ENCODE measurements at regions of chr14 and their contacts with region 1.

Region 1: DNA sequence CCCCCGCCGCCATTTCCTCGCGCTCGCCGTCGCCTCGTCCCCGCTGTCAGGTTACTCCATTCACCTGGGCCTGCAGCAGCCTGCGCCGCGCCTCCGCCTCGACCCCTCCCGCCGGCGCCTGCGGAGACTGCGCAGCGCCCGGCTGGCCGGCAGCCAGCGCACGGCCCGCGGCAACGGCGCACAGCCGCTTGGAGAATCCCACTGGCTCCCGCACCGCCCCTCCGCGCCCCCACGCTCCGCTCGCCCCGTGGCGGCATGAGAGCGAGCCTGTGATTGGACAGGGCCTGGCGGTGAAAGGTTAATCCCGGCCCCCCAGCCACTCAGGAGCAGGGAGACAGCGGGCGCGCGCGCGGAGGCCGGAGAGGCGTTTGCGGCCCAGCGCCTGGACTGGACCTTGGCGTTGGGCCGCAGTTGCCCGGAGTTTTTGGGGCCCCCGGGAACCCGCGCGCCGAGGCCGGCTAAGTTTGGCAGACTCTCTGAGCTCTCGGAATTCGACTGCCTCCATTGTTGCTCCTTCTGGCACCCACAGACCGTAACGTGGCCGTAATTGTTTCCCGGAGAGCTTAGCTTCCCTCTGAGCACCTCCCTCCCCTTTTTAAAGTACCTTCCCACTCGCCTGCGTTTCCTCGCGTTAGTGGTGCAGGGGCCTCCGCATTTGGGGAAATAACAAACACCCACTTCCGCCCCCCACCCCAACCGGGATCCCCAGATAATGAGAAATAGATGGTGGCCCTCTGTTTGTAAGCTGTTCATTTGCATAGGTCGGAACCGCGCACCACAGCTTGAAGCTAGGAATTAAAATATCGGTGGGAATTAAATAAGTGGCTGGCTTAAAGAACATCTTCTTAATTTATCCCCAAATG is at the start of gene DICER1:
- DNase-seq: peak; percentile 90 to 98 (median 94)
- ATAC-seq: peak; percentile 84
- H3K4me3 ChIP-seq: peak within 1 kb of the TSS; percentile 87
- H3K4me3 Mint-ChIP-seq: peak within 1 kb of the TSS; percentile 98
- H3K27ac ChIP-seq: peak within 1 kb of the TSS; percentile 89 to 95
- H3K27ac Mint-ChIP-seq: peak within 1 kb of the TSS; percentile 99
- H3K4me1 ChIP-seq: peaks cover 40% of the 10 kb centered on the region
- H3K4me1 Mint-ChIP-seq: peaks cover 42% of the 10 kb centered on the region
- H3K27me3 ChIP-seq: no peaks in the 10 kb centered on the region
- H3K27me3 Mint-ChIP-seq: no peaks in the 10 kb centered on the region
- CTCF ChIP-seq: no peak
- total RNA-seq, gene DICER1: 75.0 to 77.1 TPM

Region 2: GRCh38 chr14:94180655-94181271 is 976.8 kb before region 1 on chr14:
- CTCF ChIA-PET with region 1: no interaction called
- POLR2A ChIA-PET with region 1: no interaction called
- intact Hi-C with region 1: loop called in 1 of 2 experiments (anchors 5 kb)
- DNase-seq: peak in 3 of 9 experiments; percentile 32 to 76 (median 68)
- ATAC-seq: peak; percentile 86
- H3K4me3 ChIP-seq: no peak overlapping the region
- H3K4me3 Mint-ChIP-seq: peak overlapping the region; percentile 49
- H3K27ac ChIP-seq: no peak overlapping the region
- H3K27ac Mint-ChIP-seq: peak overlapping the region; percentile 63
- H3K4me1 ChIP-seq: no peaks in the 10 kb centered on the region
- H3K4me1 Mint-ChIP-seq: peaks cover 9% of the 10 kb centered on the region
- H3K27me3 ChIP-seq: peaks cover 0 to 2% of the 10 kb centered on the region in 2 experiments
- H3K27me3 Mint-ChIP-seq: peaks cover 15% of the 10 kb centered on the region
- CTCF ChIP-seq: peak; percentile 81

Region 3: DNA sequence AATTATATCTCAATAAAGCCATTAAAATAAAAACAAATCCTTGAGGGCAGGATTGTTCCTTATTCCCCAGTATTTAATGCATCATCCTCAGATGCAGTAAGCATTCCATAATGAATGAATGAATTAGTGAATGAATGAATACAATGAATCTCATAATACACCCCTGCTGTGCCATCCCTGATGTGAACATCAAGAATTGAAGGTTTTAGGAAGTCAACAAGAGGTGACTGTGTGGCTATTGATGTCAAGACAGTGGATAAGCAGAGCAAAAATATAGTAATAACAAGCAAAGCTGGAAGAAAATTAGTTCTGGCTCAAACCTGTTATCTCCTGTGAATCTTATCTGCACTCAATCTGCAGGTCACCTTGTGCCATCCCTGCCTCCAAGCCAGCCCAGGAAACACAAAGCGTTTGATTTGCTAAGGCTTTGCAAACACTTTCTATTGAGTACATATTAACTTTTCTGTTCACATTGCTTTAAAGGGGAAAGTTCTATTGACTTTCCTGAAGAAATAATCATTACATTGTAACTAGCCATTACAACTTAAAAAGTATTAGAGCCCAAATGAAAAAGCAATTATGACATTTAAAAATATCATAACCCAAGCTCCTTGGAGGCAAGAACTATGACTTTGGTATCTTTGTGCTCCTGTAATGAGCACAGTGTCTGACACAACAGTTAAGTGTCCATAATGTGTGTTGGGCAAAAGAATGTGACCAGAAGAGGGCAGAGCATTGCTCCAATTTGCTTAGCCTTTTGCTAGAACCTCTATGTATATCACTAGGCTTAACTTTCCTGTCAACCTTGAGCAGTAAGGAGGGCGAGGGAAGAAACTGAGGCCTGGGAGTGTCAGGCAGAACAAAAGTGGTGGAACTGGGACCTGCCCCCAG is 520.8 kb before region 1 on chr14:
- CTCF ChIA-PET with region 1: no interaction called
- POLR2A ChIA-PET with region 1: no interaction called
- intact Hi-C with region 1: no loop called
- DNase-seq: no peak
- ATAC-seq: no peak
- H3K4me3 ChIP-seq: no peak overlapping the region
- H3K4me3 Mint-ChIP-seq: no peak overlapping the region
- H3K27ac ChIP-seq: no peak overlapping the region
- H3K27ac Mint-ChIP-seq: no peak overlapping the region
- H3K4me1 ChIP-seq: no peaks in the 10 kb centered on the region
- H3K4me1 Mint-ChIP-seq: no peaks in the 10 kb centered on the region
- H3K27me3 ChIP-seq: no peaks in the 10 kb centered on the region
- H3K27me3 Mint-ChIP-seq: peaks cover 10% of the 10 kb centered on the region
- CTCF ChIP-seq: no peak

Region 4: GRCh38 chr14:95123891-95124579 is 33.5 kb before region 1 on chr14:
- CTCF ChIA-PET with region 1: no interaction called
- POLR2A ChIA-PET with region 1: no interaction called
- intact Hi-C with region 1: no loop called
- DNase-seq: no peak
- ATAC-seq: no peak
- H3K4me3 ChIP-seq: no peak overlapping the region
- H3K4me3 Mint-ChIP-seq: no peak overlapping the region
- H3K27ac ChIP-seq: no peak overlapping the region
- H3K27ac Mint-ChIP-seq: no peak overlapping the region
- H3K4me1 ChIP-seq: no peaks in the 10 kb centered on the region
- H3K4me1 Mint-ChIP-seq: peaks cover 19% of the 10 kb centered on the region
- H3K27me3 ChIP-seq: no peaks in the 10 kb centered on the region
- H3K27me3 Mint-ChIP-seq: no peaks in the 10 kb centered on the region
- CTCF ChIP-seq: no peak

Region 5: GRCh38 chr14:95197552-95197950 is 40.0 kb after region 1 on chr14:
- CTCF ChIA-PET with region 1: no interaction called
- POLR2A ChIA-PET with region 1: no interaction called
- intact Hi-C with region 1: no loop called
- DNase-seq: peak in 1 of 9 experiments; percentile 32
- ATAC-seq: no peak
- H3K4me3 ChIP-seq: no peak overlapping the region
- H3K4me3 Mint-ChIP-seq: no peak overlapping the region
- H3K27ac ChIP-seq: no peak overlapping the region
- H3K27ac Mint-ChIP-seq: no peak overlapping the region
- H3K4me1 ChIP-seq: no peaks in the 10 kb centered on the region
- H3K4me1 Mint-ChIP-seq: peaks cover 2% of the 10 kb centered on the region
- H3K27me3 ChIP-seq: no peaks in the 10 kb centered on the region
- H3K27me3 Mint-ChIP-seq: no peaks in the 10 kb centered on the region
- CTCF ChIP-seq: no peak

Region 6: GRCh38 chr14:95515596-95516552 is 358.3 kb after region 1 on chr14:
- CTCF ChIA-PET with region 1: no interaction called
- POLR2A ChIA-PET with region 1: no interaction called
- intact Hi-C with region 1: loop called in 1 of 2 experiments (anchors 5 kb)
- DNase-seq: peak; percentile 62 to 94 (median 84)
- ATAC-seq: peak; percentile 85
- H3K4me3 ChIP-seq: peak overlapping the region; percentile 65 to 79
- H3K4me3 Mint-ChIP-seq: peak overlapping the region; percentile 89
- H3K27ac ChIP-seq: peak overlapping the region; percentile 59 to 64
- H3K27ac Mint-ChIP-seq: peak overlapping the region; percentile 93
- H3K4me1 ChIP-seq: peaks cover 66% of the 10 kb centered on the region
- H3K4me1 Mint-ChIP-seq: peaks cover 70% of the 10 kb centered on the region
- H3K27me3 ChIP-seq: no peaks in the 10 kb centered on the region
- H3K27me3 Mint-ChIP-seq: no peaks in the 10 kb centered on the region
- CTCF ChIP-seq: peak; percentile 46

Region 7: DNA sequence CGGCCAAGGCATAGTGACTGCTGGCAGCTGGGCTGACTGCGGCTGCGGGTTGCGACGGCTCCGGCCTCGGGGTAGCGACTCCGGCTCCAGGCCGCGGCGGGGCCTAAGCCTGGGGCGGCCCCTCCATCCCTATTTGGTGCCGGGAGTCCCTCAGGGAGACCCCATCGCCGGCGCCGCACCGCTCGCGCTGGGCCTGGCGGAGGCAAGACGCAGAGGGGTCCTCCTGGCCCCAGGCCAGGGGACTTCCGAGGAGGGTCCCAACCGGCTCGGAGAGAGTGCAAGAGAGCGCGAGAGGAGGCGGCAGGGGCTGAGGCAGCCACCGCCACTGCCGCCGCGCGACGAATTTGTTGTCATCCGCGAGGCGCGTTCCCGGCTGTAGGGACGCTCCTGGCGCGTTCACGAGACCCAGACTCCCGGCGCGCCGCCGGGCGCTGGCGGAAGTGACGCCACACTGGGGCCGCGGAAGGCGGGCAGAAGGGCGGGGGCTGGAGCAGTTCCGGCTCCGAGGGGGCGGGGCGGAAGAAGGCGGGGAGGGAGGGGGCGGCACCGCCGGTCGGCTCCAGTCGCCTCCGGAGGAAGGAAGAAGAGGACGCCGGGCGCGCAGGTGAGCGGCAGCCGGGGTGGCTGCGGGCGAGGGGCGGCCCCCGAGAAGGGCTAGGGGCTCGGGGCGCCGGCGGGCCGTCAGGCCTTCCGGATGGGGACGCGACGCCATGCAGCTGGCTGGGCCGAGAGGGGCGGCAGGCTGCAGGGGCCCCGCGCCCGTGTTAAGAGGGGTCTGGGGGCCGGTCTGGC is 1205.6 kb after region 1 on chr14 and contains the starts of genes ATG2B and GSKIP:
- CTCF ChIA-PET with region 1: no interaction called
- POLR2A ChIA-PET with region 1: no interaction called
- intact Hi-C with region 1: loop called in 1 of 2 experiments (anchors 10 kb)
- DNase-seq: peak; percentile 95 to 99 (median 98)
- ATAC-seq: peak; percentile 84
- H3K4me3 ChIP-seq: peak within 1 kb of the TSS; percentile 87 to 97
- H3K4me3 Mint-ChIP-seq: peak within 1 kb of the TSS; percentile 89
- H3K27ac ChIP-seq: peak within 1 kb of the TSS; percentile 89 to 93
- H3K27ac Mint-ChIP-seq: peak within 1 kb of the TSS; percentile 89
- H3K4me1 ChIP-seq: peaks cover 28% of the 10 kb centered on the region
- H3K4me1 Mint-ChIP-seq: peaks cover 59% of the 10 kb centered on the region
- H3K27me3 ChIP-seq: no peaks in the 10 kb centered on the region
- H3K27me3 Mint-ChIP-seq: no peaks in the 10 kb centered on the region
- CTCF ChIP-seq: no peak
- total RNA-seq, gene ATG2B: 16.0 to 17.9 TPM
- total RNA-seq, gene GSKIP: 9.4 to 13.5 TPM

Measured in CD8-positive, alpha-beta T cell (primary cell).